ENCODE measurements at regions of chr11 and their contacts with region 1.

Region 1: GRCh38 chr11:78564490-78565467 is 9.9 kb downstream of the NARS2 start:
- DNase-seq: peak; percentile 20

Region 2: GRCh38 chr11:78228467-78228866 is 336.3 kb before region 1 on chr11:
- CTCF ChIA-PET with region 1: interaction called, 18 read pairs
- POLR2A ChIA-PET with region 1: no interaction called
- DNase-seq: peak; percentile 45

Region 3: DNA sequence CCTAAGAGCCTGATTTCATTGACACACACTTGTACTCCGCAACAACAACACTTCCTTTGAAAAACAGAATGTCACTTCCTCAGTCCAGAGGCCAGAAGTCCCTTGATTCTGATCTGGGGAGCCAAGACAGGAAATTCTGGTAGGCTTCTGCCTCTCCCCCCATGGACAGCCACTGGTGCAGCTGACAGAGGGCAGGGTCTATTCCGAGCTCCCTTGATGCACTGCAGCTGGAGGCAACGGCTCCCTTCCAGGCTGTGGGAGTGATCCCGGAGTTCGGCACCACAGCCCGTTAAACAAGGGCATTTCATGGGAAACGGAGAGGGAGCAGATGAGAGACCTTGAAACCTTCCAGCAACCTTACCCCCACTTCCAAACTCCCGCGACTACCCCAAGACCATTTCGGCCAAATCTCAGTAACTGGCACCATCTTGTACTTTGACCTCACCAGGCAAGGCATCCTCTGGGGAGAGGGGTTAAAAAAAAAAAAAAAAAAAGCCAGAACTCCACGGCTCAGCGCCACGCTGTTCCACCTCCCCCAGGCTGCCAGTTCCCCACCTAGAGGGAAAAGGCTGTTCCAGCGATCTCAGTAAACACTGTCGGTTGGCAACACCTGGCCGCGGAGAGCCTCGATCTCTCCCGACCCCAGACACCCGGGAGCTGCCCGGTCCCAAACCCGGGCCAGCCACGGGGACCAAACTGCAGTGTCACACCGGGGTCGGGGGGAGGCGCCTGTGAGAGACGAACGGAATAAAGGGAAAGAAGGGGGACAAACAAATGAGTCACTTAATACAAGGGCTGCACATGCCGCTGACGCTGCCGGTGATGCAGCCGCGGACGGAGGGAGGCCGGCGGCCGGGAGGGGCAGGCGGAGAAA is 148.2 kb before region 1 on chr11:
- CTCF ChIA-PET with region 1: interaction called, 25 read pairs
- POLR2A ChIA-PET with region 1: no interaction called
- DNase-seq: peak; percentile 65